Dorsolateral prefrontal cortex (tissue), 120 donors: ENCODE measurements at regions of chr6 and their contacts with region 1.

Region 1: DNA sequence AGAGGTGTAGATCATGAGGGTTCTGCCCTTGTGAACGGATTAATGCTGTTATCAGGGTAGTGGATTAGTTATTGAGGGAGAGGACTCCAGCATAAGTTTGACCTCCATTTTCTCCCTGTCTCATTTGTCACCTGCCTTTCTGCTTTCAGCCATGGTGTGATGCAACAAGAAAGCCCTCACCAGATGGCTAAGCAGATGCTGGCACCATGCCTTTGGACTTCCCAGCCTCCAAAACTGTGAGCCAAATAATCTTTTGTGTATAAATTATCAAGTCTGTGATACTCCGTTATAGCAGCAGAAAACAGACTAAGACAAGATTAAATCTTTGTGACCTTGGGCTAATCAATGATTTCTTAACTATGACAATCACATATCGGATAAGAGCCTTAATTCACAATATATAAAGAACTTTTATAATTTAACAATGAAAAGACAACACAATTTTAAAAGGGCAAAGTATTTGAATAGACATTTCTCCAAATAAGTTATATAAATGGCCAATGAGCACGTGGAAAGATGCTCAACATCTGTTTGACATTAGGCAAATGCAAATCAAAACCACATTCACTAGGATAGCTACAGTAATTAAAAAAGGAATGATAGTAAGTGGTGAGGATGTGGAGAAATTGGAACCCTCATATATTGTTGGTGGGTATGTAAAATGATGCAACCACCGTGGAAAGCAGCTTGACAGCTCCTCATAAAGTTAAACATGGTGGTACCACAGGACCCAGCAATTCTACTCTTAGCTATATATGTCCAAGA is 45.3 kb upstream of the IFNGR1 start:
- DNase-seq: no peak
- H3K4me3 ChIP-seq: no peak overlapping the region
- H3K27ac ChIP-seq: no peak overlapping the region
- H3K27me3 ChIP-seq: peaks cover 0 to 16% (median 0%) of the 10 kb centered on the region in 45 donors
- CTCF ChIP-seq: no peak

Region 2: GRCh38 chr6:137313928-137314855 is 49.7 kb after region 1 on chr6:
- intact Hi-C with region 1: loop called in 1 of 2 experiments (anchors 5 kb)
- DNase-seq: peak in 9 of 10 donors; percentile 18 to 78 (median 60)
- H3K4me3 ChIP-seq: peak overlapping the region in 26 of 59 donors; percentile 2 to 58 (median 24)
- H3K27ac ChIP-seq: peak overlapping the region in 2 of 59 donors; percentile 33 to 61
- H3K27me3 ChIP-seq: no peaks in the 10 kb centered on the region
- CTCF ChIP-seq: peak; percentile 66 to 89 (median 80)